A549 (cell line): ENCODE measurements at regions of chr2 and their contacts with region 1.

Region 1: GRCh38 chr2:99066075-99066958 is 75.2 kb upstream of the C2orf15 start:
- DNase-seq: peak; percentile 13 to 60
- ATAC-seq: peak; percentile 98 to 99
- H3K4me3 ChIP-seq: no peak overlapping the region
- H3K27ac ChIP-seq: no peak overlapping the region
- H3K4me1 ChIP-seq: no peaks in the 10 kb centered on the region
- CTCF ChIP-seq: peak; percentile 70
- EP300 ChIP-seq: no peak
- POLR2A ChIP-seq: no peak
- RAD21 ChIP-seq: peak; percentile 77 to 78

Region 2: DNA sequence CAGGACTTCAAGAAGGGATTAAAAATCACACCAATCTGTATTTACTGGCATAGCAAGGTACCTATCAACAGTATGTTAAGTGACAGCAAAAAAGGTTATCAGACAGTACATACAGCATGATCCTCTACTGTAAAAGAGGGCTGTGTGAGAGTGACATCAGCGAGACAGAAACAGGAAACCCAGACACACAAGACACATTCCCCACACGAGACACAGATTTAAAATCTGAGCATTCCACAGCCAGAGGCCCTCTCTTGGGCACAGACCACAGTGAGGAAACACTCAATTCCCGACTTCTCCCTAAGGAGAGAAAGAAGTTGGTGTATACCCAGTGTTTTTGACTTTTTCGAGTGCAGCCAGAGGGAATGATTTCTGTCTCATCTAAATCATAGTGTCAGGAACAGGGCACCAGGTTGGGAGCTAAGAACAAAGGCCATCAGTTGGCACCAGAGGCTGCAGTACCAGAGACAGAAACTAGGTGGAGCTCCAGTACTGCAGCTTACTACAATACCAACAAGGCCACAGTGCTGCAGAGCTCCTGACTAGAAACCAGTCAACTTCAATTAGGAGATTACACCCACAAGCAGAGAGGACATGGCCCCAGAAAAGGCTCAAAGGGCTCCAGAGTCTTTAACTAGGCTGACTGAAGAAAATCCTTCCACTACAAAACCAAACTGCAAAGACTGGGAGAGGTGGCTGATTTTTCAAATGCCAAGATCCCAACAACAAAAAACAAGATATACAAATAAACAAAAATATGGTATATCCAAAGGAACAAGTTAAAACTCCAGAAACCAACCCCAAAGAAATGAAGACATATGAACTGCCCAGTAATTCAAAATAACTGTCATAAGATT is 417.0 kb before region 1 on chr2:
- CTCF ChIA-PET with region 1: interaction called, 40 read pairs
- POLR2A ChIA-PET with region 1: no interaction called
- DNase-seq: peak; percentile 13 to 76
- ATAC-seq: peak; percentile 97 to 98
- H3K4me3 ChIP-seq: no peak overlapping the region
- H3K27ac ChIP-seq: no peak overlapping the region
- H3K4me1 ChIP-seq: no peaks in the 10 kb centered on the region
- CTCF ChIP-seq: peak; percentile 93
- EP300 ChIP-seq: no peak
- POLR2A ChIP-seq: no peak
- RAD21 ChIP-seq: peak; percentile 94 to 98

Region 3: DNA sequence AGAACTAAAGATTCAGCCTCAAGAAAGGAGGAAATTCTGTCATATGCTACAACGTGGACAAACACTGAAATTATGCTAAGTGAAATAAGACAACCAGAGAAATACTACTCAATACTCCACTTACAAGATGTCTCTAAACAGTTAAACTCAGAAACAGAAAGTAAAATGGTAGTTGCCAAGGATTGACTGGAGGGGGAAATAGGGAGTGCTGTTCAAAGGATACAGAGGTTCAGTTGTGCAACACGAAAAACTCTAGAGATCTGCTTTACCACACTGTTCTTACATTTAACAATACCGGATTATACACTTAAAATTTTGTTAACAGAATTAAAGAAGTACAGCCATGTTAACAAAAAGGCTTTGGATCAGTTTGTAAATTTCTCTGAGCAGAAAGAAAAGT is 35.4 kb after region 1 on chr2:
- CTCF ChIA-PET with region 1: no interaction called
- POLR2A ChIA-PET with region 1: no interaction called
- DNase-seq: no peak
- ATAC-seq: peak; percentile 51 to 54; a peak in 3 of 6 replicates
- H3K4me3 ChIP-seq: no peak overlapping the region
- H3K27ac ChIP-seq: no peak overlapping the region
- H3K4me1 ChIP-seq: no peaks in the 10 kb centered on the region
- CTCF ChIP-seq: no peak
- EP300 ChIP-seq: no peak
- POLR2A ChIP-seq: no peak
- RAD21 ChIP-seq: no peak

Region 4: GRCh38 chr2:99180755-99181623 is 114.7 kb after region 1 on chr2 and contains the starts of genes MITD1 and MRPL30:
- CTCF ChIA-PET with region 1: no interaction called
- POLR2A ChIA-PET with region 1: no interaction called
- DNase-seq: peak; percentile 72 to 96
- ATAC-seq: peak; percentile 93 to 97
- H3K4me3 ChIP-seq: peak within 1 kb of the TSS; percentile 94
- H3K27ac ChIP-seq: peak within 1 kb of the TSS; percentile 80 to 91
- H3K4me1 ChIP-seq: peaks cover 26% of the 10 kb centered on the region
- CTCF ChIP-seq: no peak
- EP300 ChIP-seq: no peak
- POLR2A ChIP-seq: peak; percentile 86
- RAD21 ChIP-seq: no peak
- polyA plus RNA-seq, gene MITD1: 17.8 and 33.7 TPM in 2 replicates
- polyA plus RNA-seq, gene MRPL30: 36.1 and 43.5 TPM in 2 replicates